Posterior vena cava (tissue), 2 donors: ENCODE measurements at regions of chr14 and their contacts with region 1.

Region 1: DNA sequence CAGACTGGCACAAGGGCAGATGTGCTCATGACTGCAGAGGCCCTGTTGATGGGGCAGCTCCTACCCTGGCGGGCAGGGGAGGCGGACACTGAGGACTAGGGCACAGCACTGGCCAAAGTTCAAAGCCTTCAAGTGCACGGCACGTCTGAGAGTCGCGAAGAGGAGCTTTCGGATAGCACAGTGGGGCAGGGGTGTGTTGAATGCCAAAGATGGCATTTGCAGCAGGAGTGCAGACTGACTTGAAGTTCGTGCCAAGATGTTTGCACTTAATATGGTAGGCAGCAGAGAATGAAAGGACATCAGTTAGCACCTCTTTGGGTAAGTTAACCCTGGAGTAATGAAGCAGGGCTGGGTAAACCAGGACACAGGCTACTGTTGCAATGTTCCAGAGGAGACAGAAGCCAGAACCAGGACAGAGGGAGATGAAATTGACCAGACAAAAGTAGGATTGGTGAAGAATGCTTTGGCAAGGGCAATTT is 6.7 kb upstream of the EML1 start:
- DNase-seq: no peak

Region 2: DNA sequence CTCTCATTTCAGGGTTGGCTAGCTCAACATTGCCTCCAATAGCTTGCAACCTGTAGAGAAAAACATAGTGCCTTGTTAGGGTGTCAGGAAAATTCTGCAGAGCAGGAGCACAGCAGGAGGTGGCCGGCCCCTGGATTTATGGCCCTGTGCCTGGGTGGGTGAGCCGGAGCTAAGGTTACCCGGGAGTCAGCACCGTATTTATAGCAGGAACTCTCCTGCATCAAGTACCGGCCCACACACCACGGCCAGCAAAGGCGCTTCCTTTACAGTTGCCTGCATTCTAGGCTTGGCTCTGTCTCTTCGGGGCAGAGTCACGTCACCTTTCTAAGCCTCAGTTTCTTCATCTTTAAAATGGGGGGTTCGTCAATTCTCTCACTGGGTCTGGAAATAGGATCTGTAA is 46.1 kb before region 1 on chr14:
- intact Hi-C with region 1: no loop called
- DNase-seq: no peak

Region 3: DNA sequence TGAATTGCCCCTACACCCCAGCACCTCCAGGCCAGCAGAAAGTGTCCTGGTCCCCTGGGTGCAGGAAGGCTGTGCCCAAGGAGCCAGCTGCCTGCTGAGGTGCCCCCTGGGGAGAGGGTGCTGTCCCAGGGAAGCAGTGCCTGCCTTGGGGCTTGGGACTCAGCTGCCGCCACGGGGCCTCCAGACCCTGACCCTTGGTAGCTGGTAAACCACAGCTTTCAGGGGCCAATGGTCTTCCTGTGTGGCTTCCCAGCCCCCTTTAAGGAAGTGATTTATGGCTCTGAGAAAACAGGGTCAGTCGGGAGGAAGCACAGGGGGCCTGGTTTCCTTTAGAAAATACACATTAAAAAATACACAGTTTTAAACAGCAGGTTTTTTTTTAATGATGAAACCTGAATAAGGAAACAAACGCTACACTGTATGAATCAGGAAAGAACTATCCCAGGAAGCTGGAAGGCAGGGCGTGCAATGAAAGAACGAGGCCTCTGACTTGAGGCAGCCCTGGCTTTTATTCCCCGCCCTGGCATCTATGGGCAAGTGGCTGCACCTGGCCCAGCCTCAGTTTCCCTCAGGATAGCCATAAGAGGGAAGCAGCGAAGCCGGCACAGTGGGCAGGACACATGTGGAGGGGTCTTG is 33.9 kb before region 1 on chr14:
- intact Hi-C with region 1: loop called in 1 of 2 experiments (anchors 5 kb)
- DNase-seq: peak; percentile 68